ENCODE measurements at regions of chr1 and their contacts with region 1.

Region 1: GRCh38 chr1:209616356-209617046 is 33.0 kb downstream of the CAMK1G start:
- DNase-seq: no peak
- ATAC-seq: no peak
- H3K4me3 ChIP-seq: no peak overlapping the region
- H3K27ac ChIP-seq: no peak overlapping the region
- H3K4me1 ChIP-seq: no peaks in the 10 kb centered on the region
- H3K27me3 ChIP-seq: no peaks in the 10 kb centered on the region; the same call in 1 of the 2 replicates
- CTCF ChIP-seq: no peak

Region 2: DNA sequence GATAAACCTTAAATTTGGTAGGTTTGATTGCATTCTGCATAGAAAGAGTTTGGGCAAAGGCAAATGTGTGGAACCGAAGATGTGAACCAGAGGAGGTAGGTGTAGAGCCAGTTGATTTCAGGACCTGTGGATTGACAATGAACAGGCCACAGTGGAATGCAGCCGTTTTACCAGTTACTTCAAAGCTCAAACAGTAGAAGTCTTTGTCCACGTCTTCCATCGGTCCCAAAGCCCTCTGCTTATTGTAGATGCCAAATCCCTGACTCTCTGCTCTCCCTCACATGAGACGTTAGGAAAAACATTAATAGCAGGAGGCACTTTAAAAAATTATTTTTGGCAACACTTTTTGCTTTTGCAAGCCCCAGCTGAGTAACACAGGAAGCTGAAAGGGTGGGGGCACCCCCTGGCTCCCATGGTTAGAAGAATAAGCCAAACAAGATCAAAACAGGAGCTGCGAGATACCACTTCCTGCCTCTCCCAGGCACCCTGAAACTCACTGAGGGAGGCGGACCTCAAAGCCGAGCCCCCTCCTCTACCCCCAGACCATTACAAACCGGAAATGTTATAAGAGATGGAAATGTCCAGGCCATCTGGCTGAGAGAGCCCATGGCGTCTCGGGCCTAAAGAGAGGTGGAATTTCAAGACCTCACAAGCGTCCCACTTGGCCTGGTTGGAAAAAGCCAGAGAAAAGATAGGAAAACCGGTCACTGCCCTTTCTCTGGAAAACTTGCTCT is 152.8 kb after region 1 on chr1:
- CTCF ChIA-PET with region 1: no interaction called
- POLR2A ChIA-PET with region 1: interaction called, 13 read pairs
- in situ Hi-C with region 1: no loop called
- intact Hi-C with region 1: no loop called
- DNase-seq: no peak
- ATAC-seq: no peak
- H3K4me3 ChIP-seq: no peak overlapping the region
- H3K27ac ChIP-seq: no peak overlapping the region
- H3K4me1 ChIP-seq: no peaks in the 10 kb centered on the region
- H3K27me3 ChIP-seq: no peaks in the 10 kb centered on the region
- CTCF ChIP-seq: no peak